Activated B cell treated with CpG ODN at 0.5 μM for 24 hours (primary cell): ENCODE measurements at regions of chr2 and their contacts with region 1.

Region 1: DNA sequence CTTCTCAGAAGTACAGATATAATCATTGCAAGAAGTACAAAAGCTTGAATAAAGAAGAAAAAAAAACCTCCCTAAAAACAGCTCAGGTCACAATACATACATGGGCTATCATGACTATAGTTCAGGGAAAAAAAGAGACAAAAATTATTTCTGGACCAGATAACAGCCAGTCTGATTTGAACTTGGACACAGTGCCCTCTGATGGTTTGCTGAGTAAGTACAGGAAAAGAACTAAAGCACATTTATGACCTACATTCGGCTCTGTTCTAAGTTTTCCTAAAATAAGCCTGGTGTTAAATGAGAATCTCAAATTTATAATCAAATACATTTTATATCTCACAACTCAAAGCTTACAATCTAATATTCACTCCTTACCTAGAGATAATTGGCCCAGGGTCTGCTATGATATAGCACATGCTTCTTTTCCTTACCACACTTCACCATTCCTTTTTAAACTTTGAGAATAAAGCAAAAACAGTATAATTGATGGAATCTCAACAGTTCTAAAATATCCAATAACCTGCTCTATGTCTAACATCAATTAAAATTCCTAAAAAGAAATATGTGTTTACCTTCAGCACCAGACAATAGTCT is 81.1 kb downstream of the RAPH1 start:
- DNase-seq: no peak
- ATAC-seq: peak; percentile 28
- H3K4me3 Mint-ChIP-seq: no peak overlapping the region
- H3K27ac Mint-ChIP-seq: no peak overlapping the region
- H3K4me1 Mint-ChIP-seq: no peaks in the 10 kb centered on the region
- H3K27me3 Mint-ChIP-seq: peaks cover 4% of the 10 kb centered on the region
- CTCF ChIP-seq: peak; percentile 72

Region 2: DNA sequence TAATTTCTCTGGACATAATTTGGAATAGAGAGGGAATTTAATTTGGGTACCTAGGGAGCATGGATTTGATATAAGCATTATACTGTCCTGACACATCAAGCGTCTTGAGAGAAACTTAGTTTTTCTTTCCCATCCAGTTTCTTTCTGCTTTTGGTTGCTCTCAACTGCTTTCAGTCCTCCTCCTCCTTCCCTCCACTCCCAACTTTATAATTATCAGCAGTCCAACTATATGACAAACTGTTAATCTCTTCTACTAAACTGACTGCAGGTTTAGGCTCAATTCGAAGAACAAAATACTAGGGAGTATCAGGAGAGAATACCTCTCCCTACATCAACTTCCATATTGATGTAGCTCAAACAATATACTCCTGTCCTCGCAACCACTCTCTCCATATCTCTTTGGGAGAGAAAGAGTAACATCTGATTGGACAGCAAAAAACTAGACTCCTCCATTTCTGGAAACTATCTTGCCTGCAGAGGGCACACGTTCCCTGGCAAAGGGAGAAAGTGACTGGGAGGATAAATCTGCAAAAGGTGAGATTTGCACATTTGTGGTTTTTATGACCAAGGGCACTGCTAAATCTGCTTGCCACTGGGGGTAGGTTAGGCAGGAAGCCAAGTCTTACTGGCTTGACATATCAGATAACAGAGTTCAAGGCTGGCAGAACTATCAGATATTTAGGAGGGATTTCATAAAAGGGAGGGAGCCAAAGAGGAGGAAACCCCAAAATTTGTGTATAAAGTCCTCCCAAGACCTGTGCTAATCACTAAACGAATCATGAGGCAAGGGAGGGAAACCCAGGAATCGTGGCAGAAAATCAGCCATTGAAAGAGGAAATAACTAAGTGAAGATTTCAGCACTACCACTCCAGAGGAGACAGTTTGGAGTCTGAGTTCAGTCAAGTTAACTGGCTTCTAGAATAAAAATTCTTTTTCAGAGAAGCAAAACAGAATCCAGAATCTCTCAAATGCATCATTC is 622.4 kb before region 1 on chr2:
- CTCF ChIA-PET with region 1: no interaction called
- POLR2A ChIA-PET with region 1: no interaction called
- intact Hi-C with region 1: loop called (anchors 1 kb)
- DNase-seq: no peak
- ATAC-seq: peak; percentile 58
- H3K4me3 Mint-ChIP-seq: no peak overlapping the region
- H3K27ac Mint-ChIP-seq: no peak overlapping the region
- H3K4me1 Mint-ChIP-seq: peaks cover 9% of the 10 kb centered on the region
- H3K27me3 Mint-ChIP-seq: no peaks in the 10 kb centered on the region
- CTCF ChIP-seq: no peak

Region 3: DNA sequence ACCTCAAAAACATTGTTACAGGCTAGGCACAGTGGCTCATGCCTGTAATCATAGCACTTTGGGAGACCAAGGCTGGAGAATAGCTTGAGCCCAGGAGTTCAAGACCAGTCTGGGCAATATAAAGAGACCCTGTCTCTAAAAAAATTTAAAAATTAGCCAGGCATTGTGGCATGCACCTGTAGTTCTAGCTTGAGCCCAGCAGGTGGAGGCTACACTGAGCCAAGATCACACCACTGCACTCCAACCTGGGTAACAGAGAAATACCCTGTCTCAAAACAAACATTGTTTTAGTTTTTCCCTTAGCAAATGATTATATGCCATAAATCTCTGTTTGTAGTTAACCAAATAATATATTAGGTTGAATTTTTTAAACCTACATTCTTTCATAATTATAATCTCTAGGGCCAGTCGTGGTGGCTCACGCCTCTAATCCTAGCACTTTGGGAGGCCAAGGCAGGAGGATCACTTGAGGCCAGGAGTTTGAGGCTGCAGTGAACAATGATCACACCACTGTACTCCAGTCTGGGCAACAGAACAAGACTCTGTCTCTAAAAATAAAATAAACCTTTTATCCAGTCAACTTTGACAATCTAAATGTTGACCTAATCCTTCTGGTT is 228.4 kb before region 1 on chr2:
- CTCF ChIA-PET with region 1: interaction called, 5 read pairs
- POLR2A ChIA-PET with region 1: no interaction called
- intact Hi-C with region 1: loop called (anchors 1 kb)
- DNase-seq: no peak
- ATAC-seq: peak; percentile 78
- H3K4me3 Mint-ChIP-seq: no peak overlapping the region
- H3K27ac Mint-ChIP-seq: no peak overlapping the region
- H3K4me1 Mint-ChIP-seq: no peaks in the 10 kb centered on the region
- H3K27me3 Mint-ChIP-seq: no peaks in the 10 kb centered on the region
- CTCF ChIP-seq: peak; percentile 65

Region 4: DNA sequence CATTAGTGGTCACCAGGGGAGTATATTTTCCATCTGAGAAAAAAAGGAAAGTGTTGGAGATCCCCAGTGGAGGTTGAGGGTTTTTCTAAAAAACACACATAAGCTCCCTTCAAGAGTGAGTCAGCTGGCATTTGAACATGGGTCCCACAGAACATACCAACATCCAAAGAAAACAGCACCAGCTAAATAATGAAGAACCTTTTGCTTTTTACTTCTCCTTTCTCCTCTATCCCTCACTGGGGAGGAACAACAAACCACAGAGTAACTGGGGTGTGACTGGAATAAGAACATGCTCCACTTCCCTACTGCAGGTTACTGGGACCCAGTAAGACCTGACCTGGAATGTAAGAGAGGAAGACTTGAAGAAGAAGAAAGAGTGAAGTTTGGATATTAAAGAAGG is 137.7 kb after region 1 on chr2:
- CTCF ChIA-PET with region 1: no interaction called
- POLR2A ChIA-PET with region 1: no interaction called
- intact Hi-C with region 1: no loop called
- DNase-seq: no peak
- ATAC-seq: no peak
- H3K4me3 Mint-ChIP-seq: no peak overlapping the region
- H3K27ac Mint-ChIP-seq: no peak overlapping the region
- H3K4me1 Mint-ChIP-seq: no peaks in the 10 kb centered on the region
- H3K27me3 Mint-ChIP-seq: peaks cover 56% of the 10 kb centered on the region
- CTCF ChIP-seq: no peak

Region 5: DNA sequence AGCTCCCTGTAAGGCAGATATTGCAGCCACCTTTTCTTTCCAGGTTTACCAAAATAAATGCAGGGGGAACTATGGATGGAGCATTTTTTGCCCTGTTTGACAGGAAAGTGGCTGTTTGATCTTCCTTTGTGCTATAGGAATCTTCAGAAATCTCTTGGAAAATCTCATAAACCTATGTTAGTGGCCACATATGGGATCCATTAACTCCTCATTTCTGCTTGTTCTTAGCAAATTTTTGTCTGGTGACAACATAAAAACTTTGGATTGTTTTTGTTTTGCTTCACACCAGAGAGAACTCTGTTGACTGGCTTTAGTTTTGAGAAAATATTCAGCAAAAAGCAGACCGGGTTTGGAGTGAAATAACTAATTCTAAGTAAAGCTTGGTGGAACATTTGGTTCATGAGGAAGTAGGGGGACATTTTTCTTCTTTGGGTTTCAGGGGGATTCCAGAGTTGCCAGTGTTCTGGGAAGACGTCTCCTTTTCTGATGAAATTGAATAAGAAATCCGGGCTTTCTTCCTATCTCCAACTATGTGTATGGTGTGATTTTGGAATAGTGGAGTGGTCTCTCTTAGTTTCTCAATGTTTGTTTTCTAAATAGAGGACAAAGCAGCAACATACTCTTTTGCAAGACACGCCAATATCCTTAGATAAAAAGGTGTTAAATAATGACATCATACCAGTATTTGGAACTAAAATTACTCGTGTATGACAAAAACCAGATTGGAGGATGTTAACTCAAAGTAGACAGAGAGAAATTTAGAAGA is 657.0 kb after region 1 on chr2:
- CTCF ChIA-PET with region 1: no interaction called
- POLR2A ChIA-PET with region 1: no interaction called
- intact Hi-C with region 1: no loop called
- DNase-seq: no peak
- ATAC-seq: no peak
- H3K4me3 Mint-ChIP-seq: no peak overlapping the region
- H3K27ac Mint-ChIP-seq: no peak overlapping the region
- H3K4me1 Mint-ChIP-seq: peaks cover 19% of the 10 kb centered on the region
- H3K27me3 Mint-ChIP-seq: peaks cover 28% of the 10 kb centered on the region
- CTCF ChIP-seq: no peak